ENCODE measurements at regions of chr15 and their contacts with region 1.

Region 1: DNA sequence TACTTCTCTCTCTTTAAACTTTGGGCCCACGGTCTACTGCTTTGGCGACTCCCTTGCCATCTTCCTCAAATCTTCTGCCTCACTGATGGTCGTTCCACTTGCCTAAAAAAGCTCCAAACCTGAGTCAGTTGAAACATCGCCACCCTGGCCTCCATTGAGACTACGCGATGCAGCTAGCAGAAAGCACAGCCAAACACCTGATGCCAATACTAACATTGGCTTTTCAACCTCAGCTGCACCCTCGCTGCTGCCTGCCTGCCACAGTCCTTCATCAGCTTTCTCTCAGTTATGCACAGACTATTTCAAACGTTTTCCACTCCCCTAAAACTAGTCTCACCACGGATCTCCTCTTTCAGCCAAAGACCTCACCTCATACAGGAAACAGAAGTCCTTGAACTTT is 214.2 kb upstream of the TMCO5A start:
- DNase-seq: no peak
- ATAC-seq: no peak
- H3K4me3 ChIP-seq: no peak overlapping the region
- H3K27ac ChIP-seq: no peak overlapping the region
- H3K4me1 ChIP-seq: no peaks in the 10 kb centered on the region
- H3K27me3 ChIP-seq: peaks cover 2% of the 10 kb centered on the region; the same call in 1 of the 2 replicates
- CTCF ChIP-seq: no peak
- POLR2A ChIP-seq: no peak
- RAD21 ChIP-seq: no peak

Region 2: DNA sequence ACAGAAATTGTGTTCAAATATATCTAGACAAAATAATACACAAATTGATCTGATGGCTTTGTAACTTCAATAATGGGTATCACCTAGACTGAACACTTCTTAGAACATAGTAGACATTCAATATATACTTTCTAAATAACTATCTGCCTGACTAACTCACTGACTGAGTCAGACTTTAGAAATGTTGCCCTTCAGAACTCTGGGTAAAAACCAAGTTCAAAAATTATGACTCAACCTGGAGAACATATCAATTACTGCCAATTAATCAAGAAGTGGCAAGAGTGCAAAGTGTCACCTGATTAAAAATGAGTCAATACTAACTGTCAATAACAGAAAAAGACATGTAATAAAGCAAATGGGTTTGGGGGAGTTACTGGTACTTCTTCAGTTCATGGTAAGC is 69.6 kb after region 1 on chr15:
- CTCF ChIA-PET with region 1: no interaction called
- POLR2A ChIA-PET with region 1: no interaction called
- dilution Hi-C with region 1: no loop called
- in situ Hi-C with region 1: no loop called
- intact Hi-C with region 1: loop called (anchors 10 kb)
- DNase-seq: peak; percentile 86
- ATAC-seq: peak; percentile 98
- H3K4me3 ChIP-seq: no peak overlapping the region
- H3K27ac ChIP-seq: no peak overlapping the region
- H3K4me1 ChIP-seq: peaks cover 5% of the 10 kb centered on the region; the same call in 1 of the 2 replicates
- H3K27me3 ChIP-seq: no peaks in the 10 kb centered on the region
- CTCF ChIP-seq: no peak
- POLR2A ChIP-seq: no peak
- RAD21 ChIP-seq: no peak